ENCODE measurements at regions of chr6 and their contacts with region 1.

Region 1: GRCh38 chr6:63352587-63353285 is 33.0 kb upstream of the LGSN start:
- DNase-seq: peak; percentile 61
- H3K4me3 ChIP-seq: no peak overlapping the region
- H3K27ac ChIP-seq: no peak overlapping the region
- H3K4me1 ChIP-seq: no peaks in the 10 kb centered on the region
- H3K27me3 ChIP-seq: no peaks in the 10 kb centered on the region
- CTCF ChIP-seq: peak; percentile 61

Region 2: GRCh38 chr6:63389191-63389844 is 36.6 kb after region 1 on chr6:
- intact Hi-C with region 1: no loop called
- DNase-seq: no peak
- H3K4me3 ChIP-seq: no peak overlapping the region
- H3K27ac ChIP-seq: no peak overlapping the region
- H3K4me1 ChIP-seq: no peaks in the 10 kb centered on the region
- H3K27me3 ChIP-seq: no peaks in the 10 kb centered on the region
- CTCF ChIP-seq: no peak

Region 3: GRCh38 chr6:63537126-63537958 is 184.6 kb after region 1 on chr6:
- intact Hi-C with region 1: no loop called
- DNase-seq: no peak
- H3K4me3 ChIP-seq: no peak overlapping the region
- H3K27ac ChIP-seq: no peak overlapping the region
- H3K4me1 ChIP-seq: no peaks in the 10 kb centered on the region
- H3K27me3 ChIP-seq: no peaks in the 10 kb centered on the region
- CTCF ChIP-seq: no peak

Region 4: GRCh38 chr6:63571881-63572732 is 219.4 kb after region 1 on chr6 and contains the starts of genes LOC128125822 and PTP4A1:
- intact Hi-C with region 1: loop called (anchors 10 kb)
- DNase-seq: peak; percentile 97
- H3K4me3 ChIP-seq: peak within 1 kb of the TSS; percentile 88
- H3K27ac ChIP-seq: peak within 1 kb of the TSS; percentile 99
- H3K4me1 ChIP-seq: no peaks in the 10 kb centered on the region
- H3K27me3 ChIP-seq: no peaks in the 10 kb centered on the region
- CTCF ChIP-seq: no peak
- total RNA-seq, gene PTP4A1: 182 to 247 TPM

Region 5: GRCh38 chr6:63598049-63599036 is 245.6 kb after region 1 on chr6:
- intact Hi-C with region 1: loop called (anchors 5 kb)
- DNase-seq: peak; percentile 87
- H3K4me3 ChIP-seq: peak overlapping the region; percentile 37
- H3K27ac ChIP-seq: peak overlapping the region; percentile 35
- H3K4me1 ChIP-seq: no peaks in the 10 kb centered on the region
- H3K27me3 ChIP-seq: no peaks in the 10 kb centered on the region
- CTCF ChIP-seq: peak; percentile 84

Region 6: DNA sequence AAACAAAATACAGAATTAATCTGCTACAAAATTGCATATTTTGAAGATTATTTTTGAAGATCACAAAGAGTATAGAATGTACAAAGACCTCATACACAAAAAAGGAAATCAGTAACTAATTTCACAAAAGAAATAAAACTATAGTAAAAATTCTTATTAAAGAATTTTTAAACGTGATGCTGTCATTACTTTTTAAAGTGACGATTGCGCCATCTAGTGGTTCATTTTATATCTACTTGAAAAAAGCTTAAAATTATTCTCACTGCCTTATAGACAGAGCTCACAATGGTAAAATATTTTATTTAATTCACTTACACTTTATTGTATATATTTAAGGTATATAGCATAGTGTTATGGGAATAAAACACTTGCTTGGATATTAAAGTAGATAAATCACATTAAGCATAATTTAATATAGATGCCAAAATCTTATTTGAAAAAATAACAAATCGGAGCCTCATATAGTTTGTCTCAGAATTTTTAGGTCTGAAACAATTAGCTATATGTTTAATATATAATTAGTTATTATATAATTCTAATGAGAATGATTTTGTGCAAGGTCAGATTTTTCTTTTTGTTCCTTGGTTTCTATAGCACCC is 411.7 kb after region 1 on chr6:
- intact Hi-C with region 1: loop called (anchors 5 kb)
- DNase-seq: no peak
- H3K4me3 ChIP-seq: no peak overlapping the region
- H3K27ac ChIP-seq: no peak overlapping the region
- H3K4me1 ChIP-seq: no peaks in the 10 kb centered on the region
- H3K27me3 ChIP-seq: no peaks in the 10 kb centered on the region
- CTCF ChIP-seq: peak; percentile 59

Measured in colonic mucosa (tissue), 4 donors.